ENCODE measurements at regions of chr19 and their contacts with region 1.

Region 1: GRCh38 chr19:29294343-29294811 is 81.4 kb upstream of the UQCRFS1 start:
- DNase-seq: no peak
- ATAC-seq: no peak
- H3K4me3 ChIP-seq: no peak overlapping the region
- H3K27ac ChIP-seq: no peak overlapping the region
- H3K4me1 ChIP-seq: no peaks in the 10 kb centered on the region
- H3K27me3 ChIP-seq: peaks cover 0 to 18% (median 0%) of the 10 kb centered on the region in 9 donors
- CTCF ChIP-seq: no peak
- POLR2A ChIP-seq: no peak

Region 2: DNA sequence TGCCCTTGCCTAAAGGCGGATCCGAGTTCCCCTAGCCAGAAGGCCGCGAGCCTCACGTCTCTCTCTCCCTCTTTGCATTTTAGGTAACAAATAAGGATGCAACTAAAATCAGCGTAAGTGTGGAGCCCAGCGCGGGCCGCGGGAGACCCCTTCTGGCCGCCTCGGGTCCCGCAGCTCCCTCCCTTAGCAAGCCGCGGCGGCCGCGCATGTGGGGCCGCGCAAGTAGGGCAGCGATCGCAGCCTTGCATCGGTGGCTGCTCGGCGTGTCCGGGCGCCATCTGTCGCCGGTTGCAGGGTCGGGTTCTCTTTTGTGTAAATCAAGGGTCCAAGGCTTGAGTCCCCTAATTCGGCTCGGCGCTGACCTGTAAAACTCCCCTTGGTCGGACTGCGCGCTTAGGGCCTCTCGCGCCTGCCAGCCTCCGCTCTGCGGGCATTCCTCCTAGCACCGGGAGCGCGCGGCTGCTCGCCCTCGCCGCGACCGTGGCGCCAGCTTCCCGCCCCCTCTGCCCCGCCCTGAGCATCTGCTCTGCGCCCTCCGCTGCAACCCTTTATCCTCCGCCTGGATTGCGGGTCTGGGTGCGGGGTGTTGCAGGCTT is 234.1 kb after region 1 on chr19:
- intact Hi-C with region 1: loop called in 1 of 10 experiments (anchors 10 kb)
- DNase-seq: peak; percentile 23 to 79 (median 51)
- ATAC-seq: peak in 3 of 4 donors; percentile 64 to 86 (median 82)
- H3K4me3 ChIP-seq: peak overlapping the region in 10 of 12 donors; percentile 16 to 43 (median 32)
- H3K27ac ChIP-seq: no peak overlapping the region
- H3K4me1 ChIP-seq: peaks cover 0 to 63% (median 26%) of the 10 kb centered on the region in 12 donors
- H3K27me3 ChIP-seq: peaks cover 71 to 98% (median 85%) of the 10 kb centered on the region in 9 donors
- CTCF ChIP-seq: peak; percentile 56 to 91 (median 70)
- POLR2A ChIP-seq: no peak

Measured in heart left ventricle (tissue), 16 donors.